Left colon (tissue), 2 donors: ENCODE measurements at regions of chrX and their contacts with region 1.

Region 1: DNA sequence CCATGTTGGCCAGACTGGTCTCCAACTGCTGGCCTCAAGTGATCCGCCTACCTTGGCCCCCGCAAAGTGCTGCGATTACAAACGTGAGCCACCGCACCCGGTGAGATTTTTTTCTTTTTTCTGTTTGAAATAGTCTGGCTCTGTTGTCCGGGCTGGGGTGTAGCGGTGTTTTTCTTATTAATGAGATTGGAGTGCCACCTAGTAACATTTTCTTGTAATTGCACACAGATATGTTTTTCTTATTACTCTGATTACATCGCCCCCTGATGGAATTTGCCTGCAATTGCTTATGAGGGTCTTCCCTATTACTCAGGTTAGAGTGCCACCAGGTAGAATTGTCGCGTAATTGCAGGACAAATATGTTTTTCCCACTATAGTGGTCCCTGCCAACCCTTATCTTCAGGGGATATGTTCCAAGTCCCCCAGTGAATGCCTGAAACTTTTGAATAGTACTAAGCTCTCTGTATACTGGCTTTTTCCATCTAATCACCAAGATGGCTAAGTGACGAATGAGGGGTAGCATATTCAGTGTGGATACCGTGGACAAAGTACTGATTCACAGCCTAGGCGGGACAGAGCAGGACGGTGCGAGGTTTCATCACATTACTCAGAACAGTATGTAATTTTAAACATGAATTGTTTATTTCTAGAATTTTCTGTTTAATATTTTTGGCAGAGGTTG is 8.6 kb upstream of the PDHA1 start:
- DNase-seq: no peak
- ATAC-seq: no peak

Region 2: DNA sequence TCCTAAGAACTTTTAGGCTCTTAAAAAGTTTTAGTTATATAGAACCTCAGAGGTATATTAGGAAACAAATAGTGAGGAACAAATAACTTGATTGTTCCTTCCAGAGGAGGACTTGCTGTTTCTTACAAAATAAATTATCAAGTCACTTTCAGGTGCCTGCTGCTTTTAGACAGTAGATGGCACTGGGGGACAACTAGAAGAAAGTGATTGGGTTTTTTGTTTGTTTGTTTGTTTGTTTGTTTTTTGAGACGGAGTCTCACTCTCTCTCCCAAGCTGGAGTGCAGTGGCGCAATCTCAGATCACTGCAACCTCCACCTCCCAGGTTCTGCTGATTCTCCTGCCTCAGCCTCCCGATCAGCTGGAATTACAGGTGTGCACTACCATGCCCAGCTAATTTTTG is 945.1 kb before region 1 on chrX:
- intact Hi-C with region 1: loop called in 1 of 2 experiments (anchors 5 kb)
- DNase-seq: no peak
- ATAC-seq: no peak

Region 3: GRCh38 chrX:19496711-19497110 is 161.6 kb after region 1 on chrX:
- intact Hi-C with region 1: no loop called
- DNase-seq: no peak
- ATAC-seq: no peak

Region 4: GRCh38 chrX:20294957-20295356 is 959.9 kb after region 1 on chrX:
- intact Hi-C with region 1: no loop called
- DNase-seq: no peak
- ATAC-seq: peak; percentile 71